Activated CD8-positive, alpha-beta memory T cell treated with anti-CD3 and anti-CD28 coated beads, Interleukin-2, amount 10 ng/mL, durations not matched to agents 7 days and 5 days (primary cell): ENCODE measurements at regions of chr4 and their contacts with region 1.

Region 1: DNA sequence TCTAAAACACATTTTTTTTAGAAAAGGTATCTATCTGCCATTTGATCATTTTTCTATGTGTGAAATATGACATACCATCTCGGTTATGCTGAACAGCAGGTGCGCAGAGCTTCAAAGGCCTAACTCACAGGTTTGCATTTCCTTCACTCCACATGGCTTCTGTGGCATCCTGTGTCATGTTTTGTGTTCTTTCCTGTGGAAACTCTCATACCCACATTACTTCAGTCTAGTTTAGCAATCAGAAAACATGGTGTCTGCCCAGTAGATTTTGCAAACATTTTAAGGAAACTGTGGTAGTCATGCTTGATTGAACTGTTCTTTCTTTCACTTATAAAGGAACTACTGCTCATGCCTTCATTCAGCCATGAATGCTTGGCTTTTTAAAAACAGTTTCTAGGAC is 11.3 kb upstream of the ARAP2 start:
- DNase-seq: peak; percentile 81
- ATAC-seq: peak; percentile 84
- H3K4me3 Mint-ChIP-seq: peak overlapping the region; percentile 53
- H3K27ac Mint-ChIP-seq: peak overlapping the region; percentile 94
- H3K4me1 Mint-ChIP-seq: peaks cover 52% of the 10 kb centered on the region
- H3K27me3 Mint-ChIP-seq: no peaks in the 10 kb centered on the region

Region 2: DNA sequence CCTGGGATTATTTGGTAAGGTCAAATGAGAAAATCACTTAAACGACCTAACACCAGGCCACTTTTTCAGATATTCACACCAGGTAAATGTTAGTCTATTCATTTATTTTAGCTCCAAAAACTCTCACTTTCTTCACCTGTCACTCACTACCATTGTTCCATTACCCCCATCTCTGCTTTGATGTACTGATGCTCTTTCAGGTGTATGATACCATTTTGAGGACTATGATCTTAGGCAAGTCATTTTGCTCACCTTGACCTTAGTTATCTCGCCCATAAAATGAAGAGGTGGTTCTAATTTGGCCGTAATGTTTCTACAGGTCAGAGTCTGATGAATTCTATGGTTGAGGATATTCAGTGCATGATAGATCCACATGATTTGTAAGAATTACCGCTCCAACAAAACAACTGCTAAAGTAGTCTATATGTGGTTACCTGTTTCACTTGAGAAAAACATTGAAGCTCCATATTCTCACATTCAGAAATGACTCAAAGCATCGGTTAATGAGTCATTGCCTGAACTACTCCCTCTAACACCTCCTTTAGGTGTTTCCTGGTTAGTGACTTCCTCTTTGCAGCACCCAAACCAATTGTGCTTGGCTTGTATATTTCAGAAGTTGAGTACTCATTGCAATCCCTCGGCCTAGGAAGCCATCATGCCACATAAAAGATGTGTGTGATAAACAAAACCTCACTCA is 30.4 kb after region 1 on chr4:
- CTCF ChIA-PET with region 1: interaction called, 10 read pairs
- DNase-seq: peak; percentile 85
- ATAC-seq: peak; percentile 93
- H3K4me3 Mint-ChIP-seq: peak overlapping the region; percentile 57
- H3K27ac Mint-ChIP-seq: peak overlapping the region; percentile 89
- H3K4me1 Mint-ChIP-seq: peaks cover 73% of the 10 kb centered on the region
- H3K27me3 Mint-ChIP-seq: no peaks in the 10 kb centered on the region